ENCODE measurements at regions of chr3 and their contacts with region 1.

Region 1: GRCh38 chr3:141370065-141370533 is 1.8 kb downstream of the ZBTB38 start:
- DNase-seq: peak; percentile 69 to 92
- ATAC-seq: peak; percentile 15 to 62; a peak in 4 of 6 replicates
- H3K4me3 ChIP-seq: peak overlapping the region; percentile 41; the same call in 1 of the 3 replicates
- H3K27ac ChIP-seq: peak overlapping the region; percentile 99 to 100
- H3K4me1 ChIP-seq: peaks cover 93% of the 10 kb centered on the region
- CTCF ChIP-seq: no peak
- EP300 ChIP-seq: no peak
- POLR2A ChIP-seq: no peak
- RAD21 ChIP-seq: peak in 1 of 2 experiments; percentile 31; a peak in 1 of 5 replicates

Region 2: GRCh38 chr3:141174674-141175073 is 195.4 kb before region 1 on chr3:
- CTCF ChIA-PET with region 1: no interaction called
- POLR2A ChIA-PET with region 1: no interaction called
- DNase-seq: no peak
- ATAC-seq: no peak
- H3K4me3 ChIP-seq: no peak overlapping the region
- H3K27ac ChIP-seq: no peak overlapping the region
- H3K4me1 ChIP-seq: no peaks in the 10 kb centered on the region
- CTCF ChIP-seq: no peak
- EP300 ChIP-seq: no peak
- POLR2A ChIP-seq: no peak
- RAD21 ChIP-seq: no peak

Region 3: GRCh38 chr3:141331377-141332318 is 38.5 kb before region 1 on chr3:
- CTCF ChIA-PET with region 1: interaction called, 3 read pairs
- POLR2A ChIA-PET with region 1: interaction called, 11 read pairs
- DNase-seq: peak; percentile 96 to 97
- ATAC-seq: peak; percentile 93 to 96
- H3K4me3 ChIP-seq: no peak overlapping the region
- H3K27ac ChIP-seq: peak overlapping the region; percentile 91 to 94
- H3K4me1 ChIP-seq: peaks cover 70% of the 10 kb centered on the region
- CTCF ChIP-seq: no peak
- EP300 ChIP-seq: peak; percentile 97 to 98
- POLR2A ChIP-seq: no peak
- RAD21 ChIP-seq: peak in 1 of 2 experiments; percentile 57

Measured in A549 (cell line).